Left colon (tissue), 2 donors: ENCODE measurements at regions of chr3 and their contacts with region 1.

Region 1: DNA sequence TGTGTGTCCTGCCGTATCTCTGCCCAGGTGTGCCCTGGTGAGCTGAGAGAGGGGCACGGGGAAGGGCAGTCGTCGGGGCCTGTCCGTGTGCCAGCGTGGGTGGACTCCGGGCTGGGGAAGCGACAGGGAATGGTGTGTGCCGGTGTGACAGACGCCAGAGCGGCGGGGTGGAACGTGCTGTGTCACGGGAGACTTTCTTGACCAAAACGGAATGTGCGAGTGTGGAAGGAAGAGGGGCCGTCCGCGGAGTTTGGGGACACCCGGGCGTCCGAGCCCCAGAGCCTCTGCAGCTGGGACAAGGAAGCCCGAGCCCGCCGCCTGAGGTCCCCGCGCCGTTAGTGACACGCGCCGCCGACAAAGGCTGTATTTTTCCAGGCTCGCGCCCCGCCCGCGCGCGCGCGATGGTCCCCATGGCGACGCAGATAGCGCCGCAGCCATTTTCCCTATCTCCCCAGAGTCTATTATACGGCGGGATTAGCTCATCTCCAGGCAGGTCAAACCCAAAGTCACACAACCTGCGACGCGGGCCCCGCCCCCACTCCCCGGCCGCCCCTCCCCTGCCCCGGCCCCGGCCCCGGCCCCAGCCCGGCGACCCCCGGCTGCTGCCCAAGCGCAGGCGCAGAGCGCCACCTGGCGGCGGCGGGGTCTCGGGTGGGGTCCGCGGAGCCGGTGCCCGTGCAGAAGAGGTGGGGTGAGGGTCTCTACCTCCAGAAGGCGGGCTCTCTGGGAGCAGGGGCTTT is 4.6 kb upstream of the GATA2 start:
- DNase-seq: peak in 1 of 2 donors; percentile 77
- ATAC-seq: peak; percentile 91

Region 2: DNA sequence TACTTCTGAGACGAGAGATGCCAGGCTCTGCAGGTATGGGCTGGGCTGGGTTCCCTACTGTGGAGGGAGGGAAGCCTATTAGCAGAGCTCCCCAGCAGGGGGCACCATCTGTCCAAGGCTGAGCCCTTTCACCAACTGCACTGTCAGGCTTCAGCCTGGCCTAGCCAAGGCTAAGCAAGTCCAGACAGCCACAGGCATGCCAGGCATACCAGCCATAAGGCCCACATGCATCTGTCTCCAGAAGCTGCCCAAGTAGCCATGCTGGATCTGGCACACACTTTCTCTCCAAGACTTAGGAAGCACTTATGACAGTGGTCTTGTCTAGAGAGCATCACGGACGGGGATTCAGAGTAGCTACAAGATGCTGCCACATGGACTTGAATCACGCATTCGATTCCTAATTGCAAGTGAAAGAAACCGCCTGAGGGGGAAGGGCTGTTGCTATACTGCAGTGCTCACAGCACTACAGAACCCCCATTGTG is 402.3 kb before region 1 on chr3:
- intact Hi-C with region 1: loop called in 1 of 2 experiments (anchors 10 kb)
- DNase-seq: peak; percentile 68 to 91
- ATAC-seq: peak; percentile 97

Region 3: DNA sequence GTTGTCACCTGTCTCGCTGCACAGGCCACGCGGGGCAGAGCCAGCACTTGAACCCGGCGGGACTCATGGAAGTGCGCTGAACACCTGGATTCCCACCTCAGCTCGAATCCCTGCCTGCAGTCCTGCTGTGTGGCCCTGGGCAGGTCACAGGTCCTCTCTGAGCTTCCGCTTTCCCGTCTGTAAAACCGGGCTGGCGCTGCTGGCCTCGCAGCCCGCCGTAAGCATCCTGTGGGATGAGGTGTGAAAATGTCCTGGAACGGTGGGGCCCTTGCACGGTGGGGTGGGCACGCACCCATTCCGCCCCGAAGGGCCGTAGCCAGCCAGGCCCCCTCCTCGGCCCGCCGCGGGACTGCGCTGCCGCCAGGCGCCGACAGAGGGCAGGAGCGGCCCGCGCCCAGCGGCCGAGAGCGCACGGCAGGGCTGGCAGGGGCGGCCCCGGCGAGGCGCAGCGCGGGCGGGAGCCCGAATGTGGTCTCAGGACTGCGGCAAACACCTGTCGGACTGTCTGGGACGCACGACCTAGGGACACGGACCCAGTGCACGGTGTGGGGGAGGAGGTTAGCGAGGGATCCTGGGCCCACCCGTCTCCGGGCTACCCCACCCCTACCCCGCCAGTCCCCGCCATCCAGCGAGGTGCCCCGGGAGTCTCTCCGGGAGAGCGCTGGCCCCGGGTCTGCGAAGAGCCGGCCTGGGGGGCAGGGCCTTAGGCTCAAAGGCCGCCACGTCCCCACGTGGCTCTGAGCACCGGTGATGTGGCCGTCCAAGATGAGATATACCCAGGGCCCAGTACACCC is 71.2 kb before region 1 on chr3:
- intact Hi-C with region 1: loop called in 1 of 2 experiments (anchors 5 kb)
- DNase-seq: peak in 1 of 2 donors; percentile 41
- ATAC-seq: peak; percentile 94